ENCODE measurements at regions of chr4 and their contacts with region 1.

Region 1: GRCh38 chr4:186725469-186726425 is 2.1 kb upstream of the FAT1 start:
- DNase-seq: peak; percentile 88
- ATAC-seq: peak; percentile 62
- H3K4me3 ChIP-seq: peak overlapping the region; percentile 89
- H3K27ac ChIP-seq: peak overlapping the region; percentile 97
- H3K4me1 ChIP-seq: peaks cover 10% of the 10 kb centered on the region
- H3K27me3 ChIP-seq: no peaks in the 10 kb centered on the region
- CTCF ChIP-seq: peak; percentile 91
- POLR2A ChIP-seq: peak; percentile 61; the same call in 1 of the 2 replicates
- RAD21 ChIP-seq: peak; percentile 90

Region 2: DNA sequence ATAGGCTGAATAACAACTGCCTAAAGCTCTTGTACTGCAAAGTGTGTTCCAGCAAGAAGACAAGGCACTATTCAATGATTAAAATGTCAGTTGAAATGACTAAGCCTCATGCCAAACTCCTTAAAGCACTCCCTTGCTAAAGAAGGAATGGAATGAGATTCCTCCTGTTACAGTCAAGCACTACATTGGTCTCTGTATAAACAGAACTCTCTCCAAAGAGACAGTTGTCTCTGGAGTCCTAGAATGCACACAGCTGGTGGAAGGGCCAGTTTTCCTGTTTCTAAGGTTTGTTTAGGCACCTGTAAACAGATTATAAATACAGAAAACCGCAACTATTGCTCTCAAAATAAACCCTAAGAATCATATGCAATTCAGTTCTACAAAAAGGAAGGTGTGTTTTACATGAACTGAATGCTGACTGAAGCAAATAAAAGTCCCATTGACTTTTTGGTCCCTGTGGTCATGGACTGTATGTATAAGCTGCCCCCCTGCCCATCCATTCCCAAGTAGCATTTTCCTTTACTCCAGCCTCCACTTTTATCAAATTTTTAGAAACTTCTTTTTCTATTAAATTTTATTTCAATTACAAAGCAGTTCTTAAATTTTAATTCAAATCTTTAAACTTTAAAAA is 49.1 kb before region 1 on chr4:
- CTCF ChIA-PET with region 1: no interaction called
- POLR2A ChIA-PET with region 1: no interaction called
- dilution Hi-C with region 1: no loop called
- in situ Hi-C with region 1: no loop called
- intact Hi-C with region 1: loop called (anchors 2 kb)
- DNase-seq: peak; percentile 98
- ATAC-seq: peak; percentile 95
- H3K4me3 ChIP-seq: no peak overlapping the region
- H3K27ac ChIP-seq: no peak overlapping the region
- H3K4me1 ChIP-seq: peaks cover 25% of the 10 kb centered on the region
- H3K27me3 ChIP-seq: no peaks in the 10 kb centered on the region
- CTCF ChIP-seq: no peak
- POLR2A ChIP-seq: no peak
- RAD21 ChIP-seq: 0 out of 2 replicates have a peak, but pooled peaks have one; percentile 5

Region 3: GRCh38 chr4:186839122-186840037 is 113.6 kb after region 1 on chr4:
- CTCF ChIA-PET with region 1: interaction called, 3 read pairs
- POLR2A ChIA-PET with region 1: no interaction called
- dilution Hi-C with region 1: no loop called
- in situ Hi-C with region 1: no loop called
- intact Hi-C with region 1: loop called (anchors 1 kb)
- DNase-seq: peak; percentile 92
- ATAC-seq: peak; percentile 81
- H3K4me3 ChIP-seq: peak overlapping the region; percentile 28
- H3K27ac ChIP-seq: peak overlapping the region; percentile 90
- H3K4me1 ChIP-seq: peaks cover 18% of the 10 kb centered on the region
- H3K27me3 ChIP-seq: no peaks in the 10 kb centered on the region
- CTCF ChIP-seq: no peak
- POLR2A ChIP-seq: peak; percentile 42; the same call in 1 of the 2 replicates
- RAD21 ChIP-seq: no peak

Region 4: GRCh38 chr4:186999686-187000085 is 273.9 kb after region 1 on chr4:
- CTCF ChIA-PET with region 1: no interaction called
- POLR2A ChIA-PET with region 1: no interaction called
- dilution Hi-C with region 1: no loop called
- in situ Hi-C with region 1: no loop called
- intact Hi-C with region 1: loop called (anchors 5 kb)
- DNase-seq: no peak
- ATAC-seq: no peak
- H3K4me3 ChIP-seq: no peak overlapping the region
- H3K27ac ChIP-seq: no peak overlapping the region
- H3K4me1 ChIP-seq: no peaks in the 10 kb centered on the region
- H3K27me3 ChIP-seq: no peaks in the 10 kb centered on the region
- CTCF ChIP-seq: no peak
- POLR2A ChIP-seq: no peak
- RAD21 ChIP-seq: no peak

Region 5: GRCh38 chr4:187387739-187388138 is 662.0 kb after region 1 on chr4:
- CTCF ChIA-PET with region 1: no interaction called
- POLR2A ChIA-PET with region 1: no interaction called
- dilution Hi-C with region 1: no loop called
- in situ Hi-C with region 1: no loop called
- intact Hi-C with region 1: loop called (anchors 5 kb)
- DNase-seq: peak; percentile 47
- ATAC-seq: peak; percentile 82
- H3K4me3 ChIP-seq: no peak overlapping the region
- H3K27ac ChIP-seq: no peak overlapping the region
- H3K4me1 ChIP-seq: no peaks in the 10 kb centered on the region; the same call in 1 of the 2 replicates
- H3K27me3 ChIP-seq: no peaks in the 10 kb centered on the region
- CTCF ChIP-seq: no peak
- POLR2A ChIP-seq: no peak
- RAD21 ChIP-seq: no peak

Region 6: DNA sequence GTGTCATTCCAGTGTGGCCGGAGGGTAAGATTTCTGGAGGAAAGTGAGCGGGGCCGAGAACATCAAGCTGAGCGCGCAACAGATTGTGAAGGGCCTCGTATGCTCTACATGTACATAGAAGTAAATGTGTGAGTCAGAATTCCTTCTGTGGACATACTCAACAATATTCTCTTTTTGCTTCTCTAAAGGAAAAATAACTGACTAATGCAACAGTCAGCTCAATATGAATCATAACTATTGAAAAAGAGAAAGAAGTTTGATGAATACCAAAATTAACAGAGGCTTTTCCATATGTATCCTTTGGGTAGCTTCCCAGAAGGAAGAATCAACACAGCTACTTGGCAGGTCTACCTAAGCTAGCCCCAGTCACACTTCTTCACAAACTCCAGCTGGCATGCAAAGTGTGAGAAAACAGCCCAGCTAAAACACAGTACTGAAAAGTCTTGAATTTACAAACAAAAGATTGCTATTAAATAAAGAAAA is 1182.4 kb after region 1 on chr4:
- CTCF ChIA-PET with region 1: no interaction called
- POLR2A ChIA-PET with region 1: no interaction called
- dilution Hi-C with region 1: no loop called
- in situ Hi-C with region 1: no loop called
- intact Hi-C with region 1: loop called (anchors 10 kb)
- DNase-seq: peak; percentile 95
- ATAC-seq: peak; percentile 81
- H3K4me3 ChIP-seq: no peak overlapping the region
- H3K27ac ChIP-seq: peak overlapping the region; percentile 95
- H3K4me1 ChIP-seq: peaks cover 6% of the 10 kb centered on the region
- H3K27me3 ChIP-seq: no peaks in the 10 kb centered on the region
- CTCF ChIP-seq: no peak
- POLR2A ChIP-seq: no peak
- RAD21 ChIP-seq: no peak; the same call in 1 of the 2 replicates